ENCODE measurements at regions of chr3 and their contacts with region 1.

Region 1: DNA sequence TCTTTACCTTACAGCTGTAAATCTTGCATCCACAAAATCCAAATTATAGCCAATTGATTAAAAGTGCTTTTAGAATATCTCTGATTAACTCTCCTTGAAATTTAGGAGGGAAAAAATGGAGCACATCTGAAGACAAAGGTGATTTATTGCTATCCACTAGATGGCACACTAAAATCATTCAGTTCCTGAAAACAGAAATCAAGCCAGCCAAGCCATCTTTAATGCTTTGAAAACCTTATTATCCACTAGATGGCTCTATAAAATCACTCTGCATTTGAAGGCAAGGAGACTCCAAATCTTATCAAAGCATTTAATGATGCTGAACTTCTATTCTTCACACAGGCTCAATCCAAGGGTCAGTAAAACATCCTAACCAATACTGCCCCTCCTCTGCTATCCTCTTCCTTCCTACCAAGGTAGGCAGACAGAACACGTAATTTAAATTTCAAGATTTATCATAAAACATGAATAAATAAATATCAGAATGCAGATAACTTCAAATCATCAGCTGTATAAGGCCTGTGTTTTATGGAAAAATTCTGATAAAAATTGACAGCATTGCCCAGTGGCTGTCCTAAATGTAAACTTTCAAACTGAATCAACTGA is 48.4 kb downstream of the GOLIM4 start:
- DNase-seq: no peak
- ATAC-seq: peak; percentile 72
- H3K4me3 ChIP-seq: no peak overlapping the region
- H3K27ac ChIP-seq: no peak overlapping the region
- H3K4me1 ChIP-seq: peaks cover 0 to 3% of the 10 kb centered on the region in 2 donors
- H3K27me3 ChIP-seq: no peaks in the 10 kb centered on the region

Region 2: DNA sequence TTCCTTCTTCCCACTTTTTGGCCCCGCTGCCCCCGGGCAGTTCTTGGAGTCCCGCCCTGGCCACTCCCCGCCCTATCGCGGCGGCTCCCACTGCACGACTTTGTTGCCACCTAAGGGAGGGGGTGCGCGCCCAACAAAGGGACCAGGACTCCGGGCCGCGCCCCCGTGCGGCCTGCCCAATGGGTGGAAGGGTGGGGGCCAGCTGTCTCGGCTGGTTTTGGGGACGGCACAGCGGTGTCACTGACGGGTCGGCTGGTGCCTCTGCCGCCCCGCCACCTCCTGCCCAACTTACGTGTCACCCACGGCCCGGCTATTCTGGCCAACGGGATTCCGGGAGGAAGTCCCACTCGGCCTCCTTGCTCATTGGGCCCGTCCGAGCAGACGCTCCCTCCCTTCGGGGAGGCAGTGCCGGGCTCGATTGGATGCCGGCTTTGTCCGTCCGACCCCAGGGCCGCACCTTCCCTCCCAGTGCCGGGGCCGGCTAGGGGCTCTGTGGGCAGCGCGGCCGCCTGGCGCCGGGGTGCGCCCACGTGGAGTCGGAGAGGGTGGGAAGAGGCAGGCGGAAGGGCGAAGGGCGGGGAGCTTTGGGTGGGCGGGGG is 48.4 kb after region 1 on chr3 and contains the start of gene GOLIM4:
- intact Hi-C with region 1: loop called (anchors 5 kb)
- DNase-seq: peak; percentile 97 to 98
- ATAC-seq: peak; percentile 98
- H3K4me3 ChIP-seq: peak within 1 kb of the TSS; percentile 57 to 63
- H3K27ac ChIP-seq: peak within 1 kb of the TSS; percentile 50 to 88
- H3K4me1 ChIP-seq: peaks cover 0 to 8% of the 10 kb centered on the region in 2 donors
- H3K27me3 ChIP-seq: no peaks in the 10 kb centered on the region
- total RNA-seq, gene GOLIM4: 44.6 to 48.8 TPM

Region 3: DNA sequence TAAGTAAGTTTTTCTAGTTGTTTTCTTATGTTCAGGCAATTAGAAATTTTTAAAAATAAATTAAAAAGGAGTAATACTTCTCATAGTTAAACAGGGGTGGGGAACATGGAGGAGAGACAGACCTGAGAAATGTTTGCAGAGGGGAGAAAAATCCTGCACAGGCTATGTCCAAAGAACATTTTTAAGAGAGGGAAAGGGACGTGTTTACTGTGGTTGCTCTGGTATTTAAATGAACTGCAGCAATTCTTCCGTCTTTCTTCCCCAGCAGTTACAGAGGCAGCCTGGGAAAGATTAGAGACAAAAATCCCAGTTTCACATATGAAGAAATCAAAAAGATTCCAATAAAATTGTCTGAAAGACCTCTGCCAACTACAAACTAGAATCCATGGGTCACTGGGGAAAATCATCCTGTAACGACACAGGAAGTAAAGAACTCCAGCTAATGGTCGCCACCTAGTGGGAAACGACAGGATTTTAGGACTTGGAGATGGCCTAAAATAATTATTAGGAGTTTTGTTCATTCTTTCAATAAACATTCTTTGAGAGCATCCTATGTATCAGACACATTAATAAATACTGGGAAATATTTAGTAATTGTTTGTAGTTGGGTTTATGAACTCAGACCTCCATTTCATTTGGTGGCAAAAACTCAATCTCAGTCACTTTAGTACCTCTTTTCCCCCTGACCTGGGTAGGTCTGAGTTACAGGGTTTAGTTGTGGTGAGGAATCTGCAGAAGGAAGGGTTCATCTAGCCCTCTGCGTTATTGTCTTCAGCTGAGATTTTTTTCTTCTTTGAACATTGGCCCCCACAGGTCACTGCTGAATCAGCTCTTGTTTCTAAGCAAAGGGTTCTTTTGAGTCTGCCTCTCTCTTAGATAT is 118.3 kb after region 1 on chr3:
- intact Hi-C with region 1: loop called (anchors 1 to 2 kb)
- DNase-seq: peak in 1 of 2 donors; percentile 56
- ATAC-seq: peak; percentile 84
- H3K4me3 ChIP-seq: no peak overlapping the region
- H3K27ac ChIP-seq: no peak overlapping the region
- H3K4me1 ChIP-seq: no peaks in the 10 kb centered on the region
- H3K27me3 ChIP-seq: no peaks in the 10 kb centered on the region